ENCODE measurements at regions of chr17 and their contacts with region 1.

Region 1: DNA sequence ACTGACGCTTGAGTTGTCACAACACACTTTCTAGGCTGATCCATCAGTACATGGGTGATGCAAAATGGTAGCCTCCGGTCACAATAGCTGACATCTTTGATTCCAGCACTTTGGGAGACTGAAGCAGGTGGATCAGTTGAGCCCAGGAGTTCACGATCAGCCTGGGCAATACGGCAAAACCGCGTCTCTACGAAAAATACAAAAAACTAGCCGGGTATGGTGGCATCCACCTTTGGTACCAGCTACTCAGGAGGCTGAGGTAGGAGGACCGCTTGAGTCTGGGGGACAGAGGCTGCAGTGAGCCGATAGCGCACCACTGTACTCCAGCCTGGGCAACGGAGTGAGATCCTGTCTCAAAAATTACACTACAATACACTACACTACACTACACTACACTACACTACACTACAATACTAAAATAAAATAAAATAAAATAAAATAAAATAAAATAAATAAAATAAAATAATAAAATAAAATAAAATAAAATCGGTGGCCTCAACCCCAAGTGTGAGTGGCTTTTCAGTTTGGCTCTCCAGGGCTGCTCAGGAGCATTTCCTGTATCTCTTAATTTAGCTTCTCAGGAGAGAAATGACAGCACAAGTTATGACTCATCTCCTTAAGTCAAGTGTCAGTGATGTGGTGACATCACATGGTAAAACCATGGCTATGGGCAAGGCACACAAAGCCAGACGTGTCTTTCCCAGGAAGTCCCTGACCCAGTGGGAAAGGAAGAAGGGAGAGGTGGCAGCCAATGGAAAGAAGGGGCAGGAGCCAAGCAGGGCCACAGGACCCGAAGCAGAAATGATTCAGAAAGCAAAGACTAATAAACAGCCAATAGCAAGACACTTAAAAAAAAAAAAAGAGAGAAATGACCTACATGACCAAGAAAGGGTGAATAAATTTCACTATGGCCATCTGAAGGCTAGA is 75.3 kb upstream of the TBC1D3K start:
- DNase-seq: peak; percentile 33
- H3K4me3 Mint-ChIP-seq: peak overlapping the region; percentile 20
- H3K27ac Mint-ChIP-seq: peak overlapping the region; percentile 89
- H3K4me1 Mint-ChIP-seq: peaks cover 34% of the 10 kb centered on the region
- H3K27me3 Mint-ChIP-seq: peaks cover 4% of the 10 kb centered on the region

Region 2: GRCh38 chr17:37802712-37803416 is 46.1 kb before region 1 on chr17:
- intact Hi-C with region 1: no loop called
- DNase-seq: no peak
- H3K4me3 Mint-ChIP-seq: no peak overlapping the region
- H3K27ac Mint-ChIP-seq: no peak overlapping the region
- H3K4me1 Mint-ChIP-seq: peaks cover 3% of the 10 kb centered on the region
- H3K27me3 Mint-ChIP-seq: peaks cover 20% of the 10 kb centered on the region

Region 3: GRCh38 chr17:37833237-37833859 is 15.6 kb before region 1 on chr17:
- intact Hi-C with region 1: loop called (anchors 2 kb)
- DNase-seq: peak; percentile 32
- H3K4me3 Mint-ChIP-seq: peak overlapping the region; percentile 35
- H3K27ac Mint-ChIP-seq: peak overlapping the region; percentile 88
- H3K4me1 Mint-ChIP-seq: peaks cover 42% of the 10 kb centered on the region
- H3K27me3 Mint-ChIP-seq: peaks cover 4% of the 10 kb centered on the region